T-cell (primary cell): ENCODE measurements at regions of chrX and their contacts with region 1.

Region 1: DNA sequence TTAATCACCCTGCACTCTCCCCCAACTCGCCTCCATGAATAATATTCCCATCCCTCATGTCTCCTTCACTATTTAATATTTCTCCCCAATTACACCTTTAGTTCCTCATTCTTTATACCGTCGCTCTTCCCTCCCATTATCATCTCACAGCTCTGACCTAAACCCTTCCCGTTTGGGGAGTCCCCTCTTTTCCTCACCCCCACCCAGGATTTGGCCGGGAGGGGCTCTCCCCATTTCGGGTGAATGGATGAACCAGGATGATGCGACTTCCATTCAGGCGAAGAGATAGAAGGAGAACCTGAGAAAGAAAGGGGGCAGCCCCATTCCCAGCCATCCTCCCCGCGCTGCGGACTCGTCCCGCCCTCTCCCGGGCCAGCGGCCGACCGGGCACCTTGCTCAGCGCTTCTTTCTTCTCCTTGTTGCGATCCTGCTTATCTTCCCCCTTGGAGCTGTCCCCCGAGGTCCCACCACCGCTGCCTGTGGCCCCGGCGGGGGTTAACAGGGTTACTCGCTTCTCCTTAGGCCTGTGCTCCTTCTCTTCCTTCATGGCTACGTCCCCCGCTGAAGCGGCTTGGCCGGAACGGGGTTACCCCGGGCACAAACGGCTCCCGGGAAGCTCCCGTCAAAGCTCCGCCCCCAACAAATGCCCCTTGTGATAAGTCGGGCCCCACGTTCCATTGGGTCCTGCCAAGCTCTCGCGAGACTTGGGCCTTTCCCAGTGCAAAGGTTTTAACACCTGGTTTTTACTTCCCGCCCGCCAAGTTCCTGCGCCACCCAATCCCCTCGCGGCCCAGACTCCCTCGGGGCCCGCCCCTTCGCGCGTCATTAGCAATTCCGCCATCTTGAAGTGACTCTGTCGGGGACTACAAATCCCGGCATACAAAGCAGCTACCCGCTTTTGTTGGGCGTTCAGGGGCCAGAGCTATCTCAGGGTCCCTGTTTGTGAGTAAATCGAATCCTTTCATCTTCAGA is at the start of gene UPF3B:
- DNase-seq: peak; percentile 82 to 96 (median 93)
- ATAC-seq: peak; percentile 94 to 99 (median 98)
- H3K4me3 ChIP-seq: peak within 1 kb of the TSS; percentile 75 to 93
- H3K4me3 Mint-ChIP-seq: peak within 1 kb of the TSS; percentile 99
- H3K27ac ChIP-seq: peak within 1 kb of the TSS; percentile 94
- H3K27ac Mint-ChIP-seq: peak within 1 kb of the TSS; percentile 97 to 98
- H3K4me1 ChIP-seq: peaks cover 3 to 12% of the 10 kb centered on the region in 2 experiments
- H3K4me1 Mint-ChIP-seq: peaks cover 14 to 22% (median 16%) of the 10 kb centered on the region in 3 donors
- H3K27me3 ChIP-seq: no peaks in the 10 kb centered on the region
- H3K27me3 Mint-ChIP-seq: peaks cover 0 to 24% of the 10 kb centered on the region in 2 donors
- total RNA-seq, gene UPF3B: 7.2 to 11.8 (median 9.6) TPM

Region 2: GRCh38 chrX:119871599-119872395 is 19.1 kb after region 1 on chrX and contains the starts of genes NDUFA1 and RNF113A:
- CTCF ChIA-PET with region 1: interaction called in 1 of 2 experiments, 10 read pairs
- POLR2A ChIA-PET with region 1: interaction called, 7 to 24 read pairs
- DNase-seq: peak; percentile 62 to 92 (median 84)
- ATAC-seq: peak; percentile 90 to 95 (median 90)
- H3K4me3 ChIP-seq: peak within 1 kb of the TSS; percentile 69 to 84
- H3K4me3 Mint-ChIP-seq: peak within 1 kb of the TSS; percentile 93 to 100 (median 100)
- H3K27ac ChIP-seq: peak within 1 kb of the TSS; percentile 96
- H3K27ac Mint-ChIP-seq: peak within 1 kb of the TSS; percentile 97 to 100
- H3K4me1 ChIP-seq: peaks cover 2 to 20% of the 10 kb centered on the region in 2 experiments
- H3K4me1 Mint-ChIP-seq: peaks cover 14 to 37% (median 35%) of the 10 kb centered on the region in 3 donors
- H3K27me3 ChIP-seq: no peaks in the 10 kb centered on the region
- H3K27me3 Mint-ChIP-seq: no peaks in the 10 kb centered on the region
- total RNA-seq, gene NDUFA1: 56.3 to 60.8 (median 58.0) TPM
- total RNA-seq, gene RNF113A: 23.4 to 40.5 (median 36.5) TPM

Region 3: GRCh38 chrX:119970574-119970973 is 117.9 kb after region 1 on chrX:
- CTCF ChIA-PET with region 1: no interaction called
- POLR2A ChIA-PET with region 1: no interaction called
- DNase-seq: no peak
- ATAC-seq: no peak
- H3K4me3 ChIP-seq: no peak overlapping the region
- H3K4me3 Mint-ChIP-seq: no peak overlapping the region
- H3K27ac ChIP-seq: no peak overlapping the region
- H3K27ac Mint-ChIP-seq: no peak overlapping the region
- H3K4me1 ChIP-seq: no peaks in the 10 kb centered on the region
- H3K4me1 Mint-ChIP-seq: no peaks in the 10 kb centered on the region
- H3K27me3 ChIP-seq: no peaks in the 10 kb centered on the region
- H3K27me3 Mint-ChIP-seq: no peaks in the 10 kb centered on the region